ENCODE measurements at regions of chr2 and their contacts with region 1.

Region 1: GRCh38 chr2:217360781-217361482 is 501.1 kb upstream of the TNP1 start:
- DNase-seq: no peak

Region 2: DNA sequence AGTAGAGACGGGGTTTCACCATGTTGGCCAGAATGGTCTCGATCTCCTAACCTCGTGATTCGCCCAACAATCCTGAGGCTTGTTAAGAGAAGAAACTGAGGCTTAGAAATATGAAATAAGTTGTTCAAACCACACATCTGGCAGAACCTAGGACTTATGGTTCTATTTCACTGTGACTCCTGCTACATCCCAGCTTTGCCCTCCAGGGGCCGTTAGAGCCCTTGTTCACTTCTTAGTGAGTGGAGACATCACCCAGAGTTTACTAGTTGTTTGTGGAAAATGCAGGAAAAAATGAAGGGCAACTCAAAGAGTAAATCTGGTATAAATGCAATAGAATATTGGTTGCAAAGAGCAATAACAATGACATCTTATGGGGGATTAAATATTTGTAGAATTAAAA is 1032.6 kb before region 1 on chr2:
- intact Hi-C with region 1: loop called in 1 of 2 experiments (anchors 10 kb)
- DNase-seq: no peak

Region 3: DNA sequence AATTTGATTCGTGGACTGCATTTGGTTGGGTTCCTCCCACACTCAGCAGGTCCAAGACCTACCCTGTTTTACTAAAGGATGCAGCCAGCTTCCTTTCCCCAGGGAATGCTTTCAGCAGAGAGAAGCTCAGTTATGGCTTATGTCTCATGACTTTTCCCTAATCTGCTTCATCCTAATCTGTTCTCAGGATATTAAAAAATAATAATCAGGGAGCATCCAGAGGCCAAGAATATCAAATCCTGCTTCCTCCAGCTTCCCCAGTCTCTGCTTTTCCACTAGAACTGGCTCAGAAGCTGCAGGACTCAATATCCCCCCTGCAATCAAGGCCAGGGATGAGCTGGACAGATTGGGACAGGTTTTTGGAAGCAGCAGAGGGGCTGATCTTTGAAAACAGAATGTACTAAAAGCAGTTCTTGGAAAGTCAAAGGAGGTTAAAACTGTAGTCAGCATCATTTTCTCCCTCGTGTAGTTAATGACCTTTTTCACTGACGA is 174.2 kb before region 1 on chr2:
- intact Hi-C with region 1: loop called in 1 of 2 experiments (anchors 10 kb)
- DNase-seq: no peak

Region 4: DNA sequence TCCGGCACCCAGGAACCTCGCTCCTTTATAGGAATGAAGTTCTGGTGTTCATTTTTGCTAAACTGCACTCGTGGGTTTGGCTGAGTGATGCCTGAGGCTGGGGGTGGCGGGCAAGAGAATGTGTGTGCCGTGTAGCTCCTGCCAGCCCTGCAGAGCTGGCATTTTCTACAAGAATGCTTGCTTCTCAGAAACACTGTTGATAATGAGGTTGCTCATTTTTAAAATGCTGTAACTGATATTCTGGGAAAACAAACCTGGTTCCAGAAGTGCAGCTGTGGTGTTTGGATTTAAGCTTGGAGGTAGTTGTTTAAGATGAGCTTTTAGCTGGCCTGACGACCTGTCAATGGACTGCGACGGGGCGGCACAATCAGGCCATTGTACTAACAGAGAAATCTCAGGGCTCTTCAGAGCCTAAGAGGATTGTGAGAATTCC is 10.9 kb after region 1 on chr2:
- intact Hi-C with region 1: no loop called
- DNase-seq: no peak

Region 5: GRCh38 chr2:218429571-218430301 is 1068.8 kb after region 1 on chr2:
- intact Hi-C with region 1: no loop called
- DNase-seq: peak; percentile 20